ENCODE measurements at regions of chr10 and their contacts with region 1.

Region 1: DNA sequence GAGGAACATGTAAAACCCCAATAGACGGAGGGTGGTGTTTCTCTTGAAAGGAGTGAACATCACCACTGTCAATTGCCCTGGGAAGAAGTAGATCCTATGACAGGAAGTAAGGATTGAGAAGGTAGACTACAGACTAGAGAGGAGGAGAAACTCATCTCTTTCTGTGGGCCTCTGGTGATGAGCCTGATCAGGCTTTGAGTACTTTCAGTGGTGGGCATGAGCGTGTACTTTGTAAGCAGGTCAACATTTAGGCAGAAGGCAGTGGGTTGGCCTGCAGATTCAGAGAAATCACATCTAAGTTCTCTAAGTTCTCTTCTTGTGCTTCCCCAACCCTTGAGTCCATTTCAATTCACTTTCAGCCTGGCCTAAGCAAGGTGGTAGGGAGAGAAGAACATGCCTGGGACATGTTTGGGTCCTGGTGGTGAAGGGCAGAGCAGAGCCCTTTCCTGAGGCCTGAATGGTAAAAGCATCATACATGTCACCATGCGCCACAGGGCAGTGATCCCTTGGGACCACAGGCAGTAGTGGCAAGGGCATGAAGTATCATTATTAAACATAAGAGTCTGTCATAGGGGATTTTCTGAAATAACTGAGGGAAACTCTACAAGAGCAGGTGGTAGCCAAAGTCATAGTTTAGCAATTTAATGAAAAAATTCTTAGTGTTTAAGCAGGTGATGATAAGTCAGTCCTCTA is 56.4 kb upstream of the ANKRD1 start:
- DNase-seq: no peak
- ATAC-seq: no peak
- H3K4me3 ChIP-seq: no peak overlapping the region
- H3K27ac ChIP-seq: no peak overlapping the region
- H3K4me1 ChIP-seq: no peaks in the 10 kb centered on the region
- H3K27me3 ChIP-seq: no peaks in the 10 kb centered on the region
- CTCF ChIP-seq: no peak
- POLR2A ChIP-seq: no peak
- RAD21 ChIP-seq: no peak

Region 2: DNA sequence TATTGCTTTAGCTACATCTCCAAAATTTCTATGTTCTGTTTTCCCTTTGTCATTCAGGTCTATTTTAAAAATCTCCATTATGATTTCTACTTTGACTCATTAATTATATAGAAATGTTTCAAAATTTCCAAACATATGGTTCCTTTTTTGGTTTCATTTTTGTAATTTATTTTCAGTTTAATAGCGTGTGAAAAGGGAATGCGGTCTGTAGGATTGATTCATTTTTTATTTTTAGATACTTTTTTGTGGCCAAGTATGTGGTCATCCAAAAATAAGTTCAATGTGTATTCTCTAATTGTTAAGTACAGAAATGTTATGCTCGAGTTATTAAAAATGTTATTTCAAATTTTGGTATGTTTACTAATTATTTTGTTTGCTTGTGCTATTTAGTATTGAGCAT is 16.0 kb after region 1 on chr10:
- CTCF ChIA-PET with region 1: no interaction called
- POLR2A ChIA-PET with region 1: no interaction called
- dilution Hi-C with region 1: no loop called
- in situ Hi-C with region 1: no loop called
- intact Hi-C with region 1: loop called (anchors 2 kb)
- DNase-seq: no peak
- ATAC-seq: no peak
- H3K4me3 ChIP-seq: no peak overlapping the region
- H3K27ac ChIP-seq: no peak overlapping the region
- H3K4me1 ChIP-seq: no peaks in the 10 kb centered on the region
- H3K27me3 ChIP-seq: no peaks in the 10 kb centered on the region
- CTCF ChIP-seq: no peak
- POLR2A ChIP-seq: no peak
- RAD21 ChIP-seq: no peak

Region 3: DNA sequence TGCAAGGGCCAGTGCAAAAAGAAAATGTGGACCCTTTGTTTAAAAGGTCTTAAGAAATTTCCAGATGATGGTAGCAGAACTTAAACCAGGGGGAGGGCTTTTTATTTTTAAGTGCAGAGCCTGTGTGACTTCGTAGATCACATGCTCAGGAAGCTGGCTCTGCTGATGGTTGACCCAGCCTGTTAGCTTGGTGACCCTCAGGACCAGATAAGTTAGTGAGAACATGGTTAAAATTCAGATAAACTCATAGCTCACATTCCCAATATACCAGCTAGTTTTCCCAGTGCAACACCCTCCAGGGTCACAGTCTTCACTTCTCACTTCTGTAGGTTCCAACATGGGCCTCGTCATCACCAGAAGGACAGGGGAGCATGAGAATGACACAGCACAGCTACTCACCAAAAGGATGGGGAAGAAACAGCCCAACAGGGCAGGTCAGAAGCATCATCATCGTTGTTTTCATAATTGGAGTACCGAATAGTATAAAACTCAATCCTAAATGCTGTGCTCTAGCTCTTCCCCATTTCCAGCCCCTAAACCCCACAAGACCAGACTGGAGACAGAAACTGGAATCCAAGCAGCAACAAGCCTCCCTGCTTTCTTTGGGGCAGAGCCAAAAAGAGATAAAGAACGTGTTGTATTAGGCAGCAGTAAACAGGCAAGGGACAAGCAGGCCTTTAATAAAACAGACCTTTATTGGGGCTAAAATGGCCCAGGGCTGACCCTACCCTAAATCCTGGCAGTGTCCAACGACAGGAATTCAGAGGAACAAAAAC is 45.8 kb after region 1 on chr10:
- CTCF ChIA-PET with region 1: no interaction called
- POLR2A ChIA-PET with region 1: no interaction called
- dilution Hi-C with region 1: no loop called
- in situ Hi-C with region 1: no loop called
- intact Hi-C with region 1: no loop called
- DNase-seq: no peak
- ATAC-seq: peak; percentile 27
- H3K4me3 ChIP-seq: no peak overlapping the region
- H3K27ac ChIP-seq: no peak overlapping the region
- H3K4me1 ChIP-seq: peaks cover 3% of the 10 kb centered on the region; the same call in 1 of the 2 replicates
- H3K27me3 ChIP-seq: no peaks in the 10 kb centered on the region; the same call in 1 of the 2 replicates
- CTCF ChIP-seq: no peak
- POLR2A ChIP-seq: no peak
- RAD21 ChIP-seq: no peak

Measured in IMR-90 (cell line).